ENCODE measurements at regions of chr7 and their contacts with region 1.

Region 1: GRCh38 chr7:12524794-12525386 is 45.6 kb upstream of the SCIN start:
- DNase-seq: no peak
- H3K4me3 ChIP-seq: no peak overlapping the region
- H3K27ac ChIP-seq: no peak overlapping the region
- H3K4me1 ChIP-seq: no peaks in the 10 kb centered on the region
- H3K27me3 ChIP-seq: no peaks in the 10 kb centered on the region
- CTCF ChIP-seq: peak in 5 of 6 experiments; percentile 6 to 80 (median 68)
- POLR2A ChIP-seq: no peak

Region 2: GRCh38 chr7:12625836-12626235 is 100.9 kb after region 1 on chr7:
- intact Hi-C with region 1: loop called (anchors 5 kb)
- DNase-seq: no peak
- H3K4me3 ChIP-seq: no peak overlapping the region
- H3K27ac ChIP-seq: no peak overlapping the region
- H3K4me1 ChIP-seq: peaks cover 0 to 3% of the 10 kb centered on the region in 2 donors
- H3K27me3 ChIP-seq: no peaks in the 10 kb centered on the region
- CTCF ChIP-seq: no peak
- POLR2A ChIP-seq: no peak

Measured in thyroid gland (tissue), 4 donors.